Prostate gland (tissue), 2 donors: ENCODE measurements at regions of chr5 and their contacts with region 1.

Region 1: DNA sequence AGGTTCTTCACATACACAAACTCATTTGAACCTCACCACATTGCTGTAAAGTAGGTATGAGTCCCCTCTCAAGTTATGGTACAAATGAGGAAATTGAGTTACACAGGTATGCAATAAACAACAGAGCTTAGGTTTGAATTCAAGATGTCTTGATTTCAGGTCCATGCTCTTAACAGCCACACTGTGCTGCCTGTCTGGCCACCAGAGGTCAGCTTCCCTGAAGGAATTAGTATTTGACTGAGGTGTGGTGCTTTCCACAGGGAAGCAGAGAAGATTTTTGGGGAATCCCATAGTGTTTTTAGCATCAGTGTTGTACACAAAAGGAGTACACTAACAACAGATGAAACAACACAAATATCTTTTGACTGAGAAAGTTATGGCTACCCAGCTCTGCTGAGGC is 94.4 kb upstream of the ITGA1 start:
- DNase-seq: no peak
- H3K4me3 ChIP-seq: no peak overlapping the region
- H3K27ac ChIP-seq: no peak overlapping the region
- H3K4me1 ChIP-seq: no peaks in the 10 kb centered on the region
- H3K27me3 ChIP-seq: no peaks in the 10 kb centered on the region
- CTCF ChIP-seq: peak in 3 of 4 experiments; percentile 25 to 46 (median 38)
- POLR2A ChIP-seq: no peak

Region 2: GRCh38 chr5:52787600-52788504 is 94.6 kb after region 1 on chr5 and contains the starts of genes ITGA1 and PELO:
- intact Hi-C with region 1: loop called (anchors 5 kb)
- DNase-seq: peak; percentile 58
- H3K4me3 ChIP-seq: peak within 1 kb of the TSS; percentile 48 to 52
- H3K27ac ChIP-seq: peak within 1 kb of the TSS; percentile 85 to 88
- H3K4me1 ChIP-seq: no peaks in the 10 kb centered on the region
- H3K27me3 ChIP-seq: no peaks in the 10 kb centered on the region
- CTCF ChIP-seq: peak; percentile 13 to 60 (median 30)
- POLR2A ChIP-seq: no peak
- total RNA-seq, gene ITGA1: 43.7 to 78.3 TPM
- total RNA-seq, gene PELO: 14.9 to 18.8 TPM

Region 3: DNA sequence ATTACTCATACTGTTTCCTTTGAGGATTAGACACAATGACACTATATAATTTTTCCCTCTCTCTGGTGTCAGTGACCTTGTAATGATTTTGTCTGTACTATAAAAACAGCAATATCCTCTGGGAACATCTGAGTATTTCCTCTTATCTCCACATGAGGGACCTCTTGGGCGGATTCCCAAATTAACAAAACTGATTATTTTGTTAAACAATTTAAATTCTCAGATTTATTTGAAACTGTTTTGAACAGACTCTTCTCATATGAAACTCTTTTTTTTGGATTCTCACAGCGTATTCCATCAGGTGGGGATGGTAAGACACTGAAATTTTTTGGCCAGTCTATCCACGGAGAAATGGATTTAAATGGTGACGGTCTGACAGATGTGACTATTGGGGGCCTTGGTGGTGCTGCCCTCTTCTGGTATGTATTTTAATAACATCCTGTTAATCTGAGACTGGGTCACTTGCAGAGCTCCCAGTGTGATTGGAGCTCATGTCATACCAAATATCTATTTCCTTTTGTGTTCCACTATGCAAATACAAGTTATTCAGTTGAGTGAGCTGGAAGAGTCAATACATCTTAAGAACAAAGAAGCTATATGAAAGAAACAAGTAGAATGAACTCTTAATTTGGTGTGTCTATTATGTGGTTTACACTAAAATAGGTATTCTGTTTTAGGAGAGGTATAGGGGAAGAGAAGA is 222.0 kb after region 1 on chr5:
- intact Hi-C with region 1: loop called (anchors 5 kb)
- DNase-seq: peak; percentile 48
- H3K4me3 ChIP-seq: peak overlapping the region in 1 of 2 donors; percentile 2
- H3K27ac ChIP-seq: no peak overlapping the region
- H3K4me1 ChIP-seq: no peaks in the 10 kb centered on the region
- H3K27me3 ChIP-seq: no peaks in the 10 kb centered on the region
- CTCF ChIP-seq: peak; percentile 70 to 73 (median 71)
- POLR2A ChIP-seq: no peak

Region 4: DNA sequence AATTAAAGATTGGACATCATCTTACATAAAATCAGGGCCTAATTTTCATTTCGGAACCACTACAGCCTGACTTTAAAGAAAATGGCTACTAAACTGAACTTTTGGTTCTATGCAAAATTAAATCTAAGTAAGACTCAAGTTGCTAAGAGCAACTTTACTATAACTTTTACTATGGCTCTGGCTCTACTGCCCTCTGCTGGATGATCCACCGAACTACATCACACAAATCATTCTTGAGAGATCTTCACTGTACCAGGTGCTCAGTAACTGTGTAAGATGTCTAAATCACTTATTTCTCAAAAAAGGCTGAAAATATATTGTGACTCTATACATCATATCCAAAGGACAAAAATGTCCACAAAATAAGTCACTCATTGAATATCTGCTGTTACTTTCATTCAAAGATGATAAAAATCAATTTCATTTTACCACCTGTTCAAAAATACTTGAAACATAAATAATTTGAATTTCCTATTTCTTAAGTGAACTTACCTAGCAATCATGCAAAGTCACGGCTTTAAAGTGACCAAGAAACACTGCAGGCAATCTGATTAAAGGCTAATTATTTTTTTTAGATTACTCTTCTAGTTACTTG is 402.7 kb after region 1 on chr5:
- intact Hi-C with region 1: loop called (anchors 10 kb)
- DNase-seq: peak; percentile 73
- H3K4me3 ChIP-seq: no peak overlapping the region
- H3K27ac ChIP-seq: no peak overlapping the region
- H3K4me1 ChIP-seq: no peaks in the 10 kb centered on the region
- H3K27me3 ChIP-seq: no peaks in the 10 kb centered on the region
- CTCF ChIP-seq: peak; percentile 76 to 94 (median 90)
- POLR2A ChIP-seq: no peak